ENCODE measurements at regions of chr10 and their contacts with region 1.

Region 1: DNA sequence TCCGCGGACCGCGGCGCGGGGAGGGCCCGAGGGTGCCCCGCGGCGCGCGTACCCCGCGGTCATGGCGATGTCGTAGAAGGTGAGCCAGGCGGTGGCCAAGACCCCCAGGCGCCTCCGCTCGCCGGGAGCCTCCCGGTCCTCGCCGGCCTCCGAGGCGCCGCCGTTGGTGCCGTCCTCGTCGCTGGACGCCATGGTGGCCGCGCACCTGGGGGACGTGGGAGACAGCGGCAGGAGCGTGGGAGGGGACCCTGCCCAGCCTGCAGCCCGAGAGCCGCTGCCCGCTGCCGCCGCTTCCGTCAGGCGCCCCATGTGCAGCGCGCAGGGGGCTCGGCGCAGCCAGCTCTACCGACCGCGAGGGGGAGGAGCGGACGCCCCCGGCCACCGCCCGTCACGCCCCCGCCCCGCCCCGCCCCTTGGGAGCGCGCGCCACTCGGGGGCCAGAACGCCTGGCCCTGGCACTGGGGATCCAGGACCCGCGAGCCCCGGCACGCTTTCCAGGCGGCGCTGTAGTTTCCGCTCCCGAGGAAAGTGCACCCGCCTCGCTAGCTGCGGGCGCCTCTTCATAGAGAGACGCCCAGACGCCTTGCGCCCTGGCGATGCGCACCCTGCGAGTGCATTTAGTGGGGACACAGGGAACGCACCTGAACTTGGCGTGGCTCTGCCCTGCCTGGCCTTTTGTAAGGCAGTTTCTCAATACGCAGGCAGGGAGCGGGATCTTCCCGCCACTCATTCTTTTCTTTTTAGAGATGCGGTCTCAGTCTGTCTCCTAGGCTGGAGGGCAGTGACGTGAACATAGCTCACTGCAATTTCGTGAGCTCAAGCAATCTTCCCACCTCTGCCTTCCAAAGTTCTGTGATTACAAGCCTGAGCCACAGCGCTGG is at the start of gene HACD1:
- DNase-seq: peak; percentile 64
- H3K4me3 Mint-ChIP-seq: peak within 1 kb of the TSS; percentile 82
- H3K27ac Mint-ChIP-seq: no peak within 1 kb of the TSS
- H3K4me1 Mint-ChIP-seq: peaks cover 3% of the 10 kb centered on the region
- H3K27me3 Mint-ChIP-seq: peaks cover 12% of the 10 kb centered on the region
- total RNA-seq, gene HACD1: 0.41 to 1.9 TPM

Region 2: GRCh38 chr10:17454161-17455014 is 162.9 kb before region 1 on chr10 and contains the start of gene ST8SIA6:
- CTCF ChIA-PET with region 1: no interaction called
- intact Hi-C with region 1: loop called (anchors 2 kb)
- DNase-seq: peak; percentile 62
- H3K4me3 Mint-ChIP-seq: peak within 1 kb of the TSS; percentile 80
- H3K27ac Mint-ChIP-seq: no peak within 1 kb of the TSS
- H3K4me1 Mint-ChIP-seq: peaks cover 17% of the 10 kb centered on the region
- H3K27me3 Mint-ChIP-seq: peaks cover 12% of the 10 kb centered on the region
- total RNA-seq, gene ST8SIA6: not detected

Region 3: DNA sequence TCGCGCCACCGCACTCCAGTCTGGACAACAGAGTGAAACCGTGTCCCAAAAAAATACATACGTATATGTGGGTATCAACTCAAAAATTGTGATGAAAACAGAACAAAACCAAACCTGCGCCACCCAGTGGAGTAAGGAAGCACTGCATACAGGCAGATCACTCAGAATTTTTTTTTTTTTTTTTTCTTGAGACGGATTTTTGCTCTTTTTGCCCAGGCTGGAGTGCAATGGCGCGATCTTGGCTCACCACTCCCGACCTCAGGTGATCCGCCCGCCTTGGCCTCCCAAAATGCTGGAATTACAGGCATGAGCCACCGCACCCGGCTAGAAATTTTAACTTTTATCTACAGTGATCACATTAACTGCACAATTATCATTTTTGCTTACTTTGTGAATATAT is 125.6 kb after region 1 on chr10:
- CTCF ChIA-PET with region 1: interaction called, 3 read pairs
- intact Hi-C with region 1: loop called (anchors 1 kb)
- DNase-seq: peak; percentile 83
- H3K4me3 Mint-ChIP-seq: no peak overlapping the region
- H3K27ac Mint-ChIP-seq: no peak overlapping the region
- H3K4me1 Mint-ChIP-seq: peaks cover 8% of the 10 kb centered on the region
- H3K27me3 Mint-ChIP-seq: no peaks in the 10 kb centered on the region

Measured in activated naive CD4-positive, alpha-beta T cell treated with anti-CD3 and anti-CD28 coated beads for 36 hours (primary cell).